Mucosa of descending colon (tissue), 3 donors: ENCODE measurements at regions of chr13 and their contacts with region 1.

Region 1: DNA sequence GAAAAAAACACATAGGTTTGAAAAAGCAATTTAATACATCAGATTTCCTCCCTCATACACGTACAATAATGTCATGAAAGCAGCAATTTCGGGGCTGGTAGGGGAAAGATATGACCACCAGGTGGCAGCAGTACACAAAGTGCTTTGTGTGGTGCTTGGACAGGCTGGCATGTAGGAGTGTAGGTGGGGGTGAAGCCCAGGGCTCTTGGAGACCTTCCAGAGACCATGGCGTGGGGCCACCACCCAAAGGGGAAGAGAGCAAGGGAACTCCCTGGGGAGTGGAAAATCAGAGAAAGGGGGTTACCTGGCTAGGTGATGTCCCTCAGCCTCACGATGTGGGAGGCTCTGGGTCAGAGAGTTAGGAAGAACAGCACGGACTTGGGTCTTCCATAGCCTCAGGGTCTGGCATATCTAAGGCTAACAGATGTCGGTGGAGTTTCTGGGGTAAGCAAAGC is 11.8 kb upstream of the CCNA1 start:
- DNase-seq: peak; percentile 35 to 83 (median 48)
- ATAC-seq: peak; percentile 80
- H3K4me3 ChIP-seq: no peak overlapping the region
- H3K4me1 ChIP-seq: no peaks in the 10 kb centered on the region
- CTCF ChIP-seq: peak; percentile 50

Region 2: DNA sequence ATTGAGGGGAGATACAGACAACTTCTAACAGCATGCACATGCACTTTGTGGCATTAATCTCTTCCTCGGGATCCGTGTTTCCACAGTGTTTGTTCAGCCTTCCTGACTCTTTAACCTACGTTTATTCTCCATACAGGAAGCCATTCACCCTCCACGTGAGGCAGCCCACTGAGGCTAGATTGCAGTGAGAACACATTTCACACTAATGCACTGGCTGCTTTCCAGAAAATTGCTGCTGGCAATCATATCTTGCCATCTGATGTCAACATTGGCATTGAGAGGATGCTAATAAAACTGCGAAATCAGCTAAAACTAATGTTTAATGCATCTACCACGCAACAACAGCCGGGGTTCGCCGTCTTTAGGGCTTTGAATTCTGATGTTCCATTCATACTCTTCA is 319.3 kb before region 1 on chr13:
- intact Hi-C with region 1: no loop called
- DNase-seq: no peak
- ATAC-seq: no peak
- H3K4me3 ChIP-seq: no peak overlapping the region
- H3K4me1 ChIP-seq: no peaks in the 10 kb centered on the region
- CTCF ChIP-seq: no peak

Region 3: DNA sequence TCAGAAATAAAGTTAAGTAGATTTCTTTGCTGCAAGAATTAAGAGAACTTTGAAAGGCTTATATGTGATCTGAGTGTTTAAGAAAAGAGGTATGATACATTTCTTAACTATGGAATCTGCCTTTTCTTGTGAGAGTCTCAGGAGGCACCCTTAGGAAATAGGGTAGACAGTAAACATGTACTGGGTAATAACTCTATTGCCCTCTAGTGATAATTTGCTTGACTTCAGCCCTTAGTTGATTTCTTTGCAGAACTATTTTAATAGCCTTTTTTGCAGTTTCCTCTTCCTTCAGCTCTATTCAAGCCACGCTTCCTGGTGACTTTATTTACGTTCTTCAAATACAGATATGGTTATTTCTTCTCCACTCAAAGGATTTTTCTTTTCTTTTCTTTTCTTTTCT is 25.2 kb before region 1 on chr13:
- intact Hi-C with region 1: no loop called
- DNase-seq: no peak
- ATAC-seq: no peak
- H3K4me3 ChIP-seq: no peak overlapping the region
- H3K4me1 ChIP-seq: no peaks in the 10 kb centered on the region
- CTCF ChIP-seq: no peak

Region 4: GRCh38 chr13:36736119-36736726 is 315.8 kb after region 1 on chr13:
- intact Hi-C with region 1: loop called (anchors 10 kb)
- DNase-seq: peak in 1 of 3 donors; percentile 57
- ATAC-seq: no peak
- H3K4me3 ChIP-seq: no peak overlapping the region
- H3K4me1 ChIP-seq: no peaks in the 10 kb centered on the region
- CTCF ChIP-seq: peak; percentile 39